ENCODE measurements at regions of chr10 and their contacts with region 1.

Region 1: DNA sequence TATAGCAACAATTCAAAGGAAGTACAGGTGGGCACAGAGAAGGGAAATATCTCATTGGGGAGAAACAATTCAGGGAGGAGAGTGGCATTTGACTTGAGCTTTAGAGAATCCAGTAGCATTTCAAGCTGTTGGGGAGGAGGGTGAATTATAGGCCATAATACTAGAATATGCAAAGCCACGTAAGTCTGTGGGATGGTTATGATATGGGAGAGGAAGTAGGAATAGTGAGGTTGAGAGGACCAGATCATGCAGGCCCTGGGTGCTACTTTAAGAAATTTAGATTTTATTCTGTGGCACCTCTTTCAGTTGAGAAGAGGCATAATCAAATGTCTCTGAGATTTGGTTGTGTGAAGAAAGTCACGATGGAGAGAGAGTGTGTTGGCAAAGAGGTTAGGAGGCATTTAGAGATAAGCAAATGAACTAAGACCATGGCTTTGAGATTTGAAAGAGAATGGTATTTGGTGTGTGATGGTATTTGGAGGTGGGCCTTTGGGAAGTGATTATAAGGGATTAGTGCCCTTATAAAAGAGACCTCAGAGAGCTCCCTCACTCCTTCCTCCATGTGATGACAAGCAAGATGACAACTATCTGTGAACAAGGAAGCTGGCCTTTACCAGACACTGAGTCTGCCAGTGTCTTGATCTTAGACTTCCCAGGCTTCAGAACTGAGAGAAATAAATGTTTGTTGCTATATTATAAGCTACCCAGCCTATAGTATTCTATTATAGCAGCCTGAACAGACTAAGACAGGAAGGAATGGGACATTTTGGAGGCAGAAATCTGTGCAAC is 15.1 kb downstream of the ADD3 start:
- DNase-seq: no peak
- ATAC-seq: no peak
- H3K4me3 ChIP-seq: no peak overlapping the region
- H3K4me3 Mint-ChIP-seq: peak overlapping the region; percentile 26
- H3K27ac ChIP-seq: no peak overlapping the region
- H3K27ac Mint-ChIP-seq: peak overlapping the region; percentile 43
- H3K4me1 ChIP-seq: peaks cover 16% of the 10 kb centered on the region
- H3K4me1 Mint-ChIP-seq: peaks cover 90% of the 10 kb centered on the region
- H3K27me3 ChIP-seq: no peaks in the 10 kb centered on the region
- H3K27me3 Mint-ChIP-seq: no peaks in the 10 kb centered on the region
- CTCF ChIP-seq: no peak

Region 2: GRCh38 chr10:110036640-110037039 is 13.7 kb after region 1 on chr10:
- CTCF ChIA-PET with region 1: interaction called, 3 read pairs
- POLR2A ChIA-PET with region 1: interaction called, 3 read pairs
- intact Hi-C with region 1: loop called in 1 of 2 experiments (anchors 2 kb)
- DNase-seq: no peak
- ATAC-seq: no peak
- H3K4me3 ChIP-seq: no peak overlapping the region
- H3K4me3 Mint-ChIP-seq: peak overlapping the region; percentile 14
- H3K27ac ChIP-seq: no peak overlapping the region
- H3K27ac Mint-ChIP-seq: peak overlapping the region; percentile 56
- H3K4me1 ChIP-seq: peaks cover 45% of the 10 kb centered on the region
- H3K4me1 Mint-ChIP-seq: peaks cover 98% of the 10 kb centered on the region
- H3K27me3 ChIP-seq: no peaks in the 10 kb centered on the region
- H3K27me3 Mint-ChIP-seq: no peaks in the 10 kb centered on the region
- CTCF ChIP-seq: no peak

Measured in CD4-positive, alpha-beta T cell (primary cell).